HCT116 (cell line): ENCODE measurements at regions of chr10 and their contacts with region 1.

Region 1: GRCh38 chr10:66925896-66926715 is at the start of gene LRRTM3:
- DNase-seq: peak; percentile 77
- ATAC-seq: peak; percentile 100
- H3K4me3 ChIP-seq: peak within 1 kb of the TSS; percentile 21 to 26
- H3K27ac ChIP-seq: no peak within 1 kb of the TSS
- H3K4me1 ChIP-seq: no peaks in the 10 kb centered on the region
- H3K27me3 ChIP-seq: no peaks in the 10 kb centered on the region; the same call in 1 of the 2 replicates
- CTCF ChIP-seq: peak; percentile 29 to 73 (median 72); a peak in 4 of 6 replicates
- POLR2A ChIP-seq: no peak
- RAD21 ChIP-seq: peak; percentile 50
- total RNA-seq, gene LRRTM3: not detected

Region 2: DNA sequence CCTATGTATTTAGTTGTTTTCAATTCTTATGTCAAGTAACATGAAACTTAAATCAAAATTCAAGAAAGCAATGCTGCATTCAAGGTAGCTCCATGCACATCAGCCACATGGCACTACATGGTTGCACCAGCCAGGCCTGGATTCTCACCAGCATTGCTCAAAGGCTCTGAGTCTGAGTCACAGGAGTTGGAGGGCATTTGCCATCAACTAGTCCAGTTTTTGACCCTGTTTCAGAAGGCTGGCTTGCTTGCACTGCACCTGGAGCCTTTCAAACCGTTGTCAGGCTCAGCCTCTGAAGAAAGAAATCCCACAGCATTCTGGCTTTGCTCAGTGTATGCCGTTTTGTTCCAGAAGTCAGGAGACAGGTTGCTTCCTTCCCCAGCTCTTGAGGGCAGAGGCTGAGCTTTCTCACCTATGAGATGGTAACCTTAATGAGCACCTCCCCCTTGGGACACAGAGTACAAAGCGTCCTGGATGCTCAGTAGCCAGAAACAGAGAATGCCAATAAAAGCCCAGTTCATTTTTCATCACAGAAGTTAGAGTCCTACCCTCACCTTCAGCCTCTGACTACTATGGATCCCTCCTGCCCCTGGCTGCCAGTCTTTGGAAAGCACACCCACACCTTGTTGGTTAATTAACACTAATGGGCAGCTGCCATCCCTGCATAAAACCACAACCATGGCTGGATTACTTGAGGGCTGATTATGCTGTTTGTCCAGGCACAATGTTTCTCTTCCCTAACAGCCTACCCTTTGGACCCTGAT is 288.7 kb before region 1 on chr10:
- CTCF ChIA-PET with region 1: no interaction called
- POLR2A ChIA-PET with region 1: no interaction called
- RAD21 ChIA-PET with region 1: no interaction called
- intact Hi-C with region 1: loop called (anchors 10 kb)
- DNase-seq: no peak
- ATAC-seq: no peak
- H3K4me3 ChIP-seq: no peak overlapping the region
- H3K27ac ChIP-seq: no peak overlapping the region
- H3K4me1 ChIP-seq: no peaks in the 10 kb centered on the region
- H3K27me3 ChIP-seq: no peaks in the 10 kb centered on the region
- CTCF ChIP-seq: no peak
- POLR2A ChIP-seq: no peak
- RAD21 ChIP-seq: no peak

Region 3: GRCh38 chr10:66862687-66863258 is 63.3 kb before region 1 on chr10:
- CTCF ChIA-PET with region 1: no interaction called
- POLR2A ChIA-PET with region 1: no interaction called
- RAD21 ChIA-PET with region 1: no interaction called
- intact Hi-C with region 1: no loop called
- DNase-seq: no peak
- ATAC-seq: no peak
- H3K4me3 ChIP-seq: no peak overlapping the region
- H3K27ac ChIP-seq: no peak overlapping the region
- H3K4me1 ChIP-seq: no peaks in the 10 kb centered on the region
- H3K27me3 ChIP-seq: no peaks in the 10 kb centered on the region
- CTCF ChIP-seq: no peak
- POLR2A ChIP-seq: no peak
- RAD21 ChIP-seq: no peak